Naive thymus-derived CD4-positive, alpha-beta T cell (primary cell): ENCODE measurements at regions of chr9 and their contacts with region 1.

Region 1: GRCh38 chr9:36190388-36191287 is at the start of gene CLTA:
- DNase-seq: peak; percentile 75 to 97 (median 96)
- ATAC-seq: peak; percentile 99
- H3K4me3 ChIP-seq: peak within 1 kb of the TSS; percentile 98
- H3K4me3 Mint-ChIP-seq: peak within 1 kb of the TSS; percentile 86 to 98 (median 95)
- H3K27ac ChIP-seq: peak within 1 kb of the TSS; percentile 91
- H3K27ac Mint-ChIP-seq: peak within 1 kb of the TSS; percentile 80 to 97 (median 94)
- H3K4me1 ChIP-seq: peaks cover 25 to 35% of the 10 kb centered on the region in 2 donors
- H3K4me1 Mint-ChIP-seq: peaks cover 43 to 58% (median 49%) of the 10 kb centered on the region in 7 donors
- H3K27me3 ChIP-seq: no peaks in the 10 kb centered on the region
- H3K27me3 Mint-ChIP-seq: no peaks in the 10 kb centered on the region
- total RNA-seq, gene CLTA: 32.2 to 140 (median 69.5) TPM

Region 2: DNA sequence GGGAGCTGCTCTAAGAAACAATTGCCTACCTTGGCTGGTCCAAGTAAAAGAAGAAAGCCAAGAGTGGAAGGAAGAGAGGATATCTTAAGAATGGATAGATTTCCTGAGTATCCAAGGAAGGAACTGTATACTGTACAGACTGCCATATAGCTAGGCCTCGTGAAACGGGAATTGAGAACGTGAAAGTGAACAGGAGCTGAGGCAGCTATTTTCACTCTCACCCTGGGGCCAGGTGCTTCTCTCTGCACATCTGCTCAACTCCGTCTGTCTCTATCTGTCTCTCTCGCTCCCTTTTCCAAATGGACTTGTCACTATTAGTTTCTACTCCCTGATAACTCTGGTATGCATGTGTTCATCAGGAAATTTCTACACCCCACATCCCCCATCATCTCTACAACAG is 621.4 kb before region 1 on chr9:
- CTCF ChIA-PET with region 1: no interaction called
- POLR2A ChIA-PET with region 1: no interaction called
- intact Hi-C with region 1: no loop called
- DNase-seq: no peak
- ATAC-seq: no peak
- H3K4me3 ChIP-seq: no peak overlapping the region
- H3K4me3 Mint-ChIP-seq: no peak overlapping the region
- H3K27ac ChIP-seq: no peak overlapping the region
- H3K27ac Mint-ChIP-seq: no peak overlapping the region
- H3K4me1 ChIP-seq: no peaks in the 10 kb centered on the region
- H3K4me1 Mint-ChIP-seq: peaks cover 0 to 29% (median 5%) of the 10 kb centered on the region in 7 donors
- H3K27me3 ChIP-seq: no peaks in the 10 kb centered on the region
- H3K27me3 Mint-ChIP-seq: no peaks in the 10 kb centered on the region

Region 3: GRCh38 chr9:35814841-35815543 is 375.6 kb before region 1 on chr9 and contains the start of gene HINT2:
- CTCF ChIA-PET with region 1: no interaction called
- POLR2A ChIA-PET with region 1: no interaction called
- intact Hi-C with region 1: loop called in 1 of 2 experiments (anchors 1 kb)
- DNase-seq: peak; percentile 84 to 98 (median 96)
- ATAC-seq: peak; percentile 86
- H3K4me3 ChIP-seq: peak within 1 kb of the TSS; percentile 100
- H3K4me3 Mint-ChIP-seq: peak within 1 kb of the TSS; percentile 91 to 100 (median 96)
- H3K27ac ChIP-seq: peak within 1 kb of the TSS; percentile 77
- H3K27ac Mint-ChIP-seq: peak within 1 kb of the TSS; percentile 87 to 99 (median 95)
- H3K4me1 ChIP-seq: peaks cover 19 to 27% of the 10 kb centered on the region in 2 donors
- H3K4me1 Mint-ChIP-seq: peaks cover 23 to 43% (median 38%) of the 10 kb centered on the region in 7 donors
- H3K27me3 ChIP-seq: no peaks in the 10 kb centered on the region
- H3K27me3 Mint-ChIP-seq: peaks cover 0 to 12% (median 0%) of the 10 kb centered on the region in 5 donors
- total RNA-seq, gene HINT2: 14.3 to 50.7 (median 22.2) TPM

Region 4: GRCh38 chr9:36102742-36103495 is 87.7 kb before region 1 on chr9:
- CTCF ChIA-PET with region 1: interaction called, 14 read pairs
- POLR2A ChIA-PET with region 1: interaction called, 4 read pairs
- intact Hi-C with region 1: loop called in 1 of 2 experiments (anchors 1 kb)
- DNase-seq: peak; percentile 70 to 87 (median 82)
- ATAC-seq: peak; percentile 100
- H3K4me3 ChIP-seq: no peak overlapping the region
- H3K4me3 Mint-ChIP-seq: no peak overlapping the region
- H3K27ac ChIP-seq: no peak overlapping the region
- H3K27ac Mint-ChIP-seq: peak overlapping the region in 4 of 9 donors; percentile 12 to 76 (median 61)
- H3K4me1 ChIP-seq: peaks cover 0 to 5% of the 10 kb centered on the region in 2 donors
- H3K4me1 Mint-ChIP-seq: peaks cover 5 to 8% (median 8%) of the 10 kb centered on the region in 7 donors
- H3K27me3 ChIP-seq: no peaks in the 10 kb centered on the region
- H3K27me3 Mint-ChIP-seq: no peaks in the 10 kb centered on the region

Region 5: GRCh38 chr9:36126016-36126730 is 64.5 kb before region 1 on chr9:
- CTCF ChIA-PET with region 1: no interaction called
- POLR2A ChIA-PET with region 1: no interaction called
- intact Hi-C with region 1: no loop called
- DNase-seq: no peak
- ATAC-seq: no peak
- H3K4me3 ChIP-seq: no peak overlapping the region
- H3K4me3 Mint-ChIP-seq: no peak overlapping the region
- H3K27ac ChIP-seq: no peak overlapping the region
- H3K27ac Mint-ChIP-seq: peak overlapping the region in 4 of 9 donors; percentile 52 to 88 (median 62)
- H3K4me1 ChIP-seq: peaks cover 14% of the 10 kb centered on the region in 2 donors
- H3K4me1 Mint-ChIP-seq: peaks cover 18 to 32% (median 29%) of the 10 kb centered on the region in 7 donors
- H3K27me3 ChIP-seq: no peaks in the 10 kb centered on the region
- H3K27me3 Mint-ChIP-seq: no peaks in the 10 kb centered on the region

Region 6: GRCh38 chr9:36166101-36166927 is 24.3 kb before region 1 on chr9:
- CTCF ChIA-PET with region 1: interaction called, 5 read pairs
- POLR2A ChIA-PET with region 1: no interaction called
- intact Hi-C with region 1: loop called in 1 of 2 experiments (anchors 1 kb)
- DNase-seq: peak; percentile 57 to 92 (median 76)
- ATAC-seq: peak; percentile 99
- H3K4me3 ChIP-seq: peak overlapping the region; percentile 64
- H3K4me3 Mint-ChIP-seq: peak overlapping the region; percentile 60 to 78 (median 70)
- H3K27ac ChIP-seq: no peak overlapping the region
- H3K27ac Mint-ChIP-seq: peak overlapping the region; percentile 47 to 85 (median 56)
- H3K4me1 ChIP-seq: peaks cover 0 to 3% of the 10 kb centered on the region in 2 donors
- H3K4me1 Mint-ChIP-seq: peaks cover 2 to 17% (median 6%) of the 10 kb centered on the region in 7 donors
- H3K27me3 ChIP-seq: no peaks in the 10 kb centered on the region
- H3K27me3 Mint-ChIP-seq: peaks cover 0 to 14% (median 0%) of the 10 kb centered on the region in 5 donors

Region 7: DNA sequence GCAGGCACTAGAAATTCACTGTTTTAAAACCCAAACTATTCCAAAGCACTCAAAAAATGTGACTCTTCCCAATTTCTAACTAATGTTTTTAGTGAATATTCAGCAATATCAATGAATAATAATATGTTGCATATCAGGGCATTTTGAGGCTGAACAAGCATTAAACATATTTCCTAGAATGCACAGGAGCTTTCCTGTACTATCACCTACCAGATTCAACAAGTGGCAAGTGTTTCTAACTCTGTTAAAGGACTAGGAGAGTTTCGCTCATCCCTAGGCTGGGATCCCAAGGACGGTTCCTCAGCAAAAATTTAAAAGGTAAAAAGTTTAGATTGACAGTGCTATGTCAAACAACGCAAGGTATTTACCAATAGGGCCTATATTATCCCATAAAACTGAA is 46.6 kb after region 1 on chr9:
- CTCF ChIA-PET with region 1: no interaction called
- POLR2A ChIA-PET with region 1: no interaction called
- intact Hi-C with region 1: loop called in 1 of 2 experiments (anchors 5 kb)
- DNase-seq: no peak
- ATAC-seq: no peak
- H3K4me3 ChIP-seq: no peak overlapping the region
- H3K4me3 Mint-ChIP-seq: no peak overlapping the region
- H3K27ac ChIP-seq: no peak overlapping the region
- H3K27ac Mint-ChIP-seq: no peak overlapping the region
- H3K4me1 ChIP-seq: no peaks in the 10 kb centered on the region
- H3K4me1 Mint-ChIP-seq: peaks cover 0 to 11% (median 5%) of the 10 kb centered on the region in 7 donors
- H3K27me3 ChIP-seq: no peaks in the 10 kb centered on the region
- H3K27me3 Mint-ChIP-seq: no peaks in the 10 kb centered on the region

Region 8: DNA sequence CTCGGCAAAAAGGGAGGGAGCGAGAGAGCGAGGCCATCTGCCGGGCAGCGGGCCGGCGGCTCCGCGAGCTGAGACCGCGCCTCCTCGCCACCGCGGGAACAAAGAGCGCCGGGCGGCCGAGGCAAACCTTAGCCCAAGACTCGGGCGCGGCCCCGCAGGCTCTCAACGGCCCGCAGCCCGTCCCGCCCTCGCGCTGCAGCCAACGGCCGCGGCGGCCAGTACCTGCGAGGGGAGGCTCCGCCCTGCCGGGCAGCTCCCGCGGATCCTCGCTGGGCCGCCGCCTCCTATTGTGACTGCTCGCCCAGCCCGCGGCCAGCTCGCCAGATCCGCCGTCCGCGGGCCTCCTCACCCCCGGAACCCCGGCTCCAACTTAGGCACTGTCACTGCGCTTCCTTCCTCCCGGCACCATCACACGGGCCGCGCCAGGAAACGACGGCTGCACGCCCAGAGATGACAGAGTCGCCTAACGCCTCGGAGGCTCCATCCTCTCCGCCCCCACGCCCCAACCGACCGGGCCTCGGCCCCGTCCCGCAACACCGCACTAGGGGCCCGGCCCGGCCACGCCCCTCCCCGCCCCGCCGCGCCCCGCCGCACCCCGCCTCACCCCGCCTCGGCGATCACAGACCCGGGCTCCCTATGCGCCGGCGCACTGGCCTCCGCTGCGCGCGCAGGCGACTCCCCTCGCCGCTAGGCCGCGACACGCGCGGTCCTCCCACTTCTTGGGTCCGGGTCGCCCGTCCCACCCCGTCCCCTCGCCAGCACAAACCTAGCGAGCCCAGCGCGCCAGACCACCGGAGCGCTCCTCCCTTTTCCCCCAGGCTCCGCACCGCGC is 209.9 kb after region 1 on chr9:
- CTCF ChIA-PET with region 1: no interaction called
- POLR2A ChIA-PET with region 1: interaction called, 3 read pairs
- intact Hi-C with region 1: loop called (anchors 1 kb)
- DNase-seq: peak; percentile 83 to 94 (median 91)
- ATAC-seq: peak; percentile 88
- H3K4me3 ChIP-seq: peak overlapping the region; percentile 77
- H3K4me3 Mint-ChIP-seq: peak overlapping the region; percentile 85 to 97 (median 92)
- H3K27ac ChIP-seq: peak overlapping the region; percentile 94
- H3K27ac Mint-ChIP-seq: peak overlapping the region; percentile 92 to 98 (median 95)
- H3K4me1 ChIP-seq: peaks cover 16 to 26% of the 10 kb centered on the region in 2 donors
- H3K4me1 Mint-ChIP-seq: peaks cover 32 to 60% (median 54%) of the 10 kb centered on the region in 7 donors
- H3K27me3 ChIP-seq: no peaks in the 10 kb centered on the region
- H3K27me3 Mint-ChIP-seq: peaks cover 0 to 2% (median 0%) of the 10 kb centered on the region in 5 donors

Region 9: DNA sequence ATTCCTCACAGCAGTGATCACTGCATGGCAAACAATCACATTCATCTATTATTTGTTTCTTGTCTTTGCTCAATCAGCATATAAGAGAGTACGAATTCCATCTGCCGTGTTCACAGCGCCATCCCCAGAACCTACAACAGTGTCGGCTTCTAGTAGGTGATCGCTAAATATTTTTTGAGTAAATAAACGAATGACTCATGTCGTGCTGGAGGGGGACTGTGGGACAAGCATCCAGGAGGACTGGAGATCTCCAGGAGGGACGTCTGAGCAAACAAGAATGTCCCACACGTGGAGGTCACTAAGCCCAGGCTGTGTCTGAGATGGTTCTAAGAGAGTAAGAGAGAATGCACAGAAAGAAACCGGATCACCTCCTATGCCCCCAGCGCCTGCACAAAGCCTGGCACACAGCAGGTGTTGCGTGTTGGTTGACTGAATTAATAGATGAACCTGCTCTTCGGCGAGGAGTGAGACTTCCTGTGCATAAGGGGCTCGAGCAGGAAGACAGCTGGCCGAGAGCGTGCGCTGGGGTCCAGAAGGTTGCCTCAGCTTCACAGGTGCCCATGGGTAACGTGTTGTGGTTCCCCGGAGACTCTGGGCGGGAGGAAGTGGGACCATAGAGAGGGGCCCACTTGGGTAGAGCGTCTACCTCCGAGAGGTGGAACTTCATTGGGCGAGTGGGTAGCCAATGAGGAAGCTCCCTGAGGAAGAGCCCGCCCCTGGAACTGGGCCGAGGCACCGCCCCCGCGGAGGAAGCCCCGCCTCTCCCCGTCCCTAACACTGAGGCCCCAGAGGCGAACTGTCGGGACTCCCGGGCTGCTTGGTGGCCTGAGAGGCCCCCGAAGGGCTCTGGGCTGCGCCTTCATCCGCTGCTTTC is 575.1 kb after region 1 on chr9:
- CTCF ChIA-PET with region 1: no interaction called
- POLR2A ChIA-PET with region 1: no interaction called
- intact Hi-C with region 1: loop called in 1 of 2 experiments (anchors 2 kb)
- DNase-seq: peak; percentile 81 to 96 (median 91)
- ATAC-seq: peak; percentile 100
- H3K4me3 ChIP-seq: peak overlapping the region; percentile 56
- H3K4me3 Mint-ChIP-seq: no peak overlapping the region
- H3K27ac ChIP-seq: peak overlapping the region; percentile 56
- H3K27ac Mint-ChIP-seq: no peak overlapping the region
- H3K4me1 ChIP-seq: no peaks in the 10 kb centered on the region
- H3K4me1 Mint-ChIP-seq: peaks cover 0 to 6% (median 2%) of the 10 kb centered on the region in 7 donors
- H3K27me3 ChIP-seq: no peaks in the 10 kb centered on the region
- H3K27me3 Mint-ChIP-seq: peaks cover 0 to 16% (median 11%) of the 10 kb centered on the region in 5 donors